CD4-positive, alpha-beta T cell (primary cell): ENCODE measurements at regions of chr9 and their contacts with region 1.

Region 1: DNA sequence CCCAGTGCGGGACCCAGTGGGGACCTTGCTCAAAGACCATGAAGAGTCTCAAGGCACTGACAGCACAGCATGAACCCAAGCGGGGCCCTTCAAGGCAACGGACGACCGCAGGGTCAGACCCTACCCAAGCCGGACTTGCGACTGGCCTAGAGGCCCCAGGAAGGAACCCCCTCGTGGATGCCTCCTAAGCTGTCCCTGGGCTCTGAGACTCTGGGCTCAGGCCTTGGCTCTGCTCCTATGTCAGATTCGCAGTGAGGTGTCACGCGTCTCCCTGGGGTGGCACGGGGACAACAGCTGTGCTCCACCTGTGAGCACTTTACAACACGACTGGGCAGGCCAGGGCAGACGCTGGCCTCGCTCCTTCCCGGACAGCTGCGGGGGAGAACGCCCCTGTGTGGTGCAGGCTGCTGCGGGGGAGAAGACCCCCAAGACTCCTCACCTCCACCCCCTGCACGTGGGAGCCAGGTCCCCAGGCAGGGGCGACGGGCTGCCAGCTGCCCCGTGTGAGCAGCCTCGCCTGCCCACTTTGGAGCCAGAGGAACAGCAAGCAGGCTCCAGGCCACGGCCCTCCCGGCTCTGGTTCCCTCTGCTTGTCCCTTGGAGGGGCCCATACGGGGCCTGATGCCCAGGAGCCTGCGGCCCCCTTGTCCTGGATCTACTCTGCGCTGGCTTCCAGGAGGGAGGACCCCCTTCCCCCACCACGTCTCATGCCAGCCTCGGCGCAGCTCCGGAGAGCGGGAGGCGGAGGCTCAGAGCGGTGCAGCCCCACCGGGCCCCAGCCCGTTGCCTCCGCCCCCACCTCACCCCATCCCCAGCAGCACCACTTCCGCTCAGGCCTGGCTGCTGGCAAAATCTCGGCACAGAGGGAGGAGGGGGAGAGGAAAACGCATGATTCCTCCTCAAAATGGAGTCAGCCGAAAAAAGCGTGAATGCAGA is 36.0 kb downstream of the SARDH start:
- DNase-seq: peak; percentile 60 to 89 (median 78)
- ATAC-seq: peak; percentile 82
- H3K4me3 ChIP-seq: peak overlapping the region; percentile 67
- H3K4me3 Mint-ChIP-seq: peak overlapping the region; percentile 90
- H3K27ac ChIP-seq: peak overlapping the region; percentile 66 to 94
- H3K27ac Mint-ChIP-seq: peak overlapping the region; percentile 98
- H3K4me1 ChIP-seq: peaks cover 67% of the 10 kb centered on the region
- H3K4me1 Mint-ChIP-seq: peaks cover 85% of the 10 kb centered on the region
- H3K27me3 ChIP-seq: no peaks in the 10 kb centered on the region
- H3K27me3 Mint-ChIP-seq: no peaks in the 10 kb centered on the region
- CTCF ChIP-seq: no peak

Region 2: GRCh38 chr9:133375724-133376654 is 326.1 kb before region 1 on chr9 and contains the starts of genes STKLD1 and SURF4:
- CTCF ChIA-PET with region 1: no interaction called
- POLR2A ChIA-PET with region 1: no interaction called
- intact Hi-C with region 1: no loop called
- DNase-seq: peak; percentile 84 to 97 (median 94)
- ATAC-seq: peak; percentile 74
- H3K4me3 ChIP-seq: peak within 1 kb of the TSS; percentile 73
- H3K4me3 Mint-ChIP-seq: peak within 1 kb of the TSS; percentile 96
- H3K27ac ChIP-seq: peak within 1 kb of the TSS; percentile 81 to 84
- H3K27ac Mint-ChIP-seq: peak within 1 kb of the TSS; percentile 98
- H3K4me1 ChIP-seq: peaks cover 53% of the 10 kb centered on the region
- H3K4me1 Mint-ChIP-seq: peaks cover 40% of the 10 kb centered on the region
- H3K27me3 ChIP-seq: no peaks in the 10 kb centered on the region
- H3K27me3 Mint-ChIP-seq: no peaks in the 10 kb centered on the region
- CTCF ChIP-seq: no peak
- total RNA-seq, gene STKLD1: 0.59 to 1.0 TPM
- total RNA-seq, gene SURF4: 90.7 to 94.6 TPM

Region 3: DNA sequence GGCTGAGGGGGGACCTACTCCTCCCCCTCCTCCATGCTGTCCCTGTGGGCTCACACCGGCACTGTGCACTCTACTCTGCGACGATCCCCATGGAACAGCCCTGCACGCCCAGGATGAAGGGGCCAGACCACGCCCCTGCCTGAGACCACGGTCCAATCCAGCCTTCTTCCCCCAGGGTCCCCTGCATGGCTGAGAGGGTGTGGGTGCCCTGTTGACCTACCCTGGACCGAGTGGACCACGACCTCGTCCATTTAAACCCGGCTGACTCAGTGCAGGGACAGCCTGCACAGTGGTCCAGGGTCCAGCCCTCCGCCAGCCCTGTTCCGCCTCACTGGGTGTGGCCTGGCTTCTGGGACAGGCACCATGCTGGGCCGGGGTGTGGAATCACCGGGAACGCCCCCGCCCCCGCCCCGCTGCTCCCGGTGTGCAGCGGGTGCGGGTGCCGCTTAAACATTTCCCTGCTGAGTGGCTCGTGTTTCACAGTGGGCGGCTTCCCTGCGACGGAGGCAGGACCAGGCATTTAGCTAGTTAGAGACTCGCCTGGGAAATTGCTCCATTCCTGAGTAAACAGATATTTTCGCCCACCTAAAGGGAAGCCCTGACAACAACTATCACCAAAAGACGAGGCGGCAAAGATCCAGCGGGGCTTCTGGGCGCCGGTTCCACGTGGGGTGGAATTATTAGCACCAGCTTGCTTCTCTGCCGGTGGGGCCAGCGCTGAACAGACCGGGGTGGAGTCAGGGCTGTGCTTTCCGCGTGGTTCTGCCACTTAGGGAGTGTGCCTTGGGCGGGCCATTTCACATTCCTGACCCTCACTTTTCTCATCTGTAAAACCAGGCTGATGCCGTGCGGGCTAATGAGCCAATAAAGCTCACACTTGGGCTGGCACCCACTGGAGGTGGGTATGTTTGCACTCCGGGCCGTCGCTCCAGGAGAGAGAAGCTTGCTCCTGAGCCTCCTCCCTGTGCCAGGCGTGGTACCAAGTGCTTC is 43.4 kb before region 1 on chr9:
- CTCF ChIA-PET with region 1: interaction called, 3 read pairs
- POLR2A ChIA-PET with region 1: interaction called, 26 read pairs
- intact Hi-C with region 1: loop called in 1 of 2 experiments (anchors 1 kb)
- DNase-seq: peak in 4 of 14 experiments; percentile 7 to 38 (median 26)
- ATAC-seq: no peak
- H3K4me3 ChIP-seq: no peak overlapping the region
- H3K4me3 Mint-ChIP-seq: peak overlapping the region; percentile 69
- H3K27ac ChIP-seq: no peak overlapping the region
- H3K27ac Mint-ChIP-seq: peak overlapping the region; percentile 93
- H3K4me1 ChIP-seq: peaks cover 50% of the 10 kb centered on the region
- H3K4me1 Mint-ChIP-seq: peaks cover 47% of the 10 kb centered on the region
- H3K27me3 ChIP-seq: peaks cover 5 to 18% of the 10 kb centered on the region in 2 experiments
- H3K27me3 Mint-ChIP-seq: peaks cover 33% of the 10 kb centered on the region
- CTCF ChIP-seq: no peak

Region 4: GRCh38 chr9:133677126-133678010 is 24.8 kb before region 1 on chr9:
- CTCF ChIA-PET with region 1: interaction called, 5 read pairs
- POLR2A ChIA-PET with region 1: interaction called, 80 read pairs
- intact Hi-C with region 1: loop called in 1 of 2 experiments (anchors 1 kb)
- DNase-seq: peak; percentile 54 to 92 (median 66)
- ATAC-seq: peak; percentile 93
- H3K4me3 ChIP-seq: no peak overlapping the region
- H3K4me3 Mint-ChIP-seq: peak overlapping the region; percentile 65
- H3K27ac ChIP-seq: peak overlapping the region; percentile 83 to 98
- H3K27ac Mint-ChIP-seq: peak overlapping the region; percentile 98
- H3K4me1 ChIP-seq: peaks cover 54% of the 10 kb centered on the region
- H3K4me1 Mint-ChIP-seq: peaks cover 57% of the 10 kb centered on the region
- H3K27me3 ChIP-seq: no peaks in the 10 kb centered on the region
- H3K27me3 Mint-ChIP-seq: no peaks in the 10 kb centered on the region
- CTCF ChIP-seq: no peak

Region 5: DNA sequence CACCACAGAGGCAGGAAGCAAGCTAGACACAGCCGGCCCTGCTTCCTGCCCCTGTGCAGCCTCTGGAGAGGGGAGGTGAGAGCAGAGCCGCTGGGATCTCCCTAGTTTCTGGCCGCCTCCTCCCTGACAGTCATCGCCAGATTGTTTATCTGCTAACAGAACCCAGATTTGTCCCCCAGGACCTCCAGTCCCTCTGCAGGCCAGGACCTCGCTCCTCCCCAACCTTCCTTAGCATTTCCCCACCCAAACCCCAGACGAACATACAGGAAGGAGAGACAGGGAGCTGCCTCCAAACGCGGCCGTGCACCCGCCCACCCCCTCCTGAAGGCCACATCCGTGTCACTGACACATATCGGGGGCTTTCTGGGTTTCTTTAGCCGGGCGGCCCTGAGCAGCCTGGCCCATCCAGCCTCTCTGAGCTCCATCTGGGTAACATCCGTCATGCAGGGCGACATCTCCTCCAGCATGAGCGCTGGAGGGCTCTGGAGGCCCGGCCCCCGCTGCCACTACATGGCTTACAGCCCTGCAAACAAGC is 18.5 kb before region 1 on chr9:
- CTCF ChIA-PET with region 1: interaction called, 20 read pairs
- POLR2A ChIA-PET with region 1: interaction called, 104 read pairs
- intact Hi-C with region 1: loop called in 1 of 2 experiments (anchors 2 kb)
- DNase-seq: peak; percentile 62 to 91 (median 78)
- ATAC-seq: peak; percentile 83
- H3K4me3 ChIP-seq: peak overlapping the region; percentile 31
- H3K4me3 Mint-ChIP-seq: peak overlapping the region; percentile 84
- H3K27ac ChIP-seq: peak overlapping the region; percentile 90 to 96
- H3K27ac Mint-ChIP-seq: peak overlapping the region; percentile 98
- H3K4me1 ChIP-seq: peaks cover 51% of the 10 kb centered on the region
- H3K4me1 Mint-ChIP-seq: peaks cover 42% of the 10 kb centered on the region
- H3K27me3 ChIP-seq: no peaks in the 10 kb centered on the region
- H3K27me3 Mint-ChIP-seq: no peaks in the 10 kb centered on the region
- CTCF ChIP-seq: no peak

Region 6: GRCh38 chr9:133691626-133692363 is 10.3 kb before region 1 on chr9:
- CTCF ChIA-PET with region 1: no interaction called
- POLR2A ChIA-PET with region 1: interaction called, 19 read pairs
- intact Hi-C with region 1: no loop called
- DNase-seq: no peak
- ATAC-seq: peak; percentile 32
- H3K4me3 ChIP-seq: no peak overlapping the region
- H3K4me3 Mint-ChIP-seq: no peak overlapping the region
- H3K27ac ChIP-seq: no peak overlapping the region
- H3K27ac Mint-ChIP-seq: peak overlapping the region; percentile 42
- H3K4me1 ChIP-seq: peaks cover 5% of the 10 kb centered on the region
- H3K4me1 Mint-ChIP-seq: peaks cover 4% of the 10 kb centered on the region
- H3K27me3 ChIP-seq: no peaks in the 10 kb centered on the region
- H3K27me3 Mint-ChIP-seq: no peaks in the 10 kb centered on the region
- CTCF ChIP-seq: no peak

Region 7: GRCh38 chr9:134443168-134444037 is 741.3 kb after region 1 on chr9:
- CTCF ChIA-PET with region 1: no interaction called
- POLR2A ChIA-PET with region 1: no interaction called
- intact Hi-C with region 1: no loop called
- DNase-seq: peak; percentile 76 to 94 (median 86)
- ATAC-seq: peak; percentile 100
- H3K4me3 ChIP-seq: no peak overlapping the region
- H3K4me3 Mint-ChIP-seq: no peak overlapping the region
- H3K27ac ChIP-seq: no peak overlapping the region
- H3K27ac Mint-ChIP-seq: peak overlapping the region; percentile 80
- H3K4me1 ChIP-seq: peaks cover 25% of the 10 kb centered on the region
- H3K4me1 Mint-ChIP-seq: peaks cover 25% of the 10 kb centered on the region
- H3K27me3 ChIP-seq: peaks cover 6 to 9% of the 10 kb centered on the region in 2 experiments
- H3K27me3 Mint-ChIP-seq: peaks cover 5% of the 10 kb centered on the region
- CTCF ChIP-seq: peak; percentile 91

Region 8: GRCh38 chr9:134469041-134469875 is 767.1 kb after region 1 on chr9:
- CTCF ChIA-PET with region 1: no interaction called
- POLR2A ChIA-PET with region 1: no interaction called
- intact Hi-C with region 1: no loop called
- DNase-seq: no peak
- ATAC-seq: no peak
- H3K4me3 ChIP-seq: no peak overlapping the region
- H3K4me3 Mint-ChIP-seq: no peak overlapping the region
- H3K27ac ChIP-seq: no peak overlapping the region
- H3K27ac Mint-ChIP-seq: no peak overlapping the region
- H3K4me1 ChIP-seq: no peaks in the 10 kb centered on the region
- H3K4me1 Mint-ChIP-seq: no peaks in the 10 kb centered on the region
- H3K27me3 ChIP-seq: no peaks in the 10 kb centered on the region
- H3K27me3 Mint-ChIP-seq: no peaks in the 10 kb centered on the region
- CTCF ChIP-seq: no peak